ENCODE measurements at regions of chr3 and their contacts with region 1.

Region 1: DNA sequence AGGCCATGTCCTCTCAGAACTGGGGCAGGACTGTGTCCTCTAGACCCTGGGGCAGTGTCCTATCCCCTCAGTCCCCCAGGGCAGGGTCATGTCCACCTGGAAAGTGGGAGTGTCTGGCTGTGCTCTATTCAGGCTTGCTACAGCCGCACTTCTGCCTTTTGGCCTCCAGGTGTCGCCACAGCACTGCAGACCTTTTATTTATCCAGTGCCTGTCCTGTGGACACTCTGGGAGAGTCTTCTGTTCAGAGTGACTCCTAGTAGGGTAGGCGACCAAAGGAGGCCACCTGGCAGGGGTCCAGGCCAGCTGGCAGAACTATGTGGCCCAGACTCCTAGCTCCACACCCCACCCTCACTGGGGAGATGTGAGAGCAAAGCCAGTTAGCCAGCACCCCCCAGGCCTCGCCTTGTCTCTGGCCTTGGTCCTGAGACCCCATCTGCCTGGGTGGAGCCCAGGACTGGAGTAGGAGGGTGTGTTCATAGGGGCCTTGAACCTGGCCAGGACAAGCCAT is 3.9 kb downstream of the TMIE start:
- DNase-seq: peak; percentile 73 to 89 (median 88)
- ATAC-seq: peak; percentile 79 to 83
- H3K4me3 ChIP-seq: no peak overlapping the region
- H3K27ac ChIP-seq: no peak overlapping the region
- H3K4me1 ChIP-seq: peaks cover 6% of the 10 kb centered on the region
- H3K27me3 ChIP-seq: no peaks in the 10 kb centered on the region

Region 2: GRCh38 chr3:46578973-46579755 is 125.9 kb before region 1 on chr3:
- intact Hi-C with region 1: no loop called
- DNase-seq: no peak
- ATAC-seq: peak; percentile 43 to 79
- H3K4me3 ChIP-seq: no peak overlapping the region
- H3K27ac ChIP-seq: no peak overlapping the region
- H3K4me1 ChIP-seq: no peaks in the 10 kb centered on the region
- H3K27me3 ChIP-seq: no peaks in the 10 kb centered on the region

Region 3: DNA sequence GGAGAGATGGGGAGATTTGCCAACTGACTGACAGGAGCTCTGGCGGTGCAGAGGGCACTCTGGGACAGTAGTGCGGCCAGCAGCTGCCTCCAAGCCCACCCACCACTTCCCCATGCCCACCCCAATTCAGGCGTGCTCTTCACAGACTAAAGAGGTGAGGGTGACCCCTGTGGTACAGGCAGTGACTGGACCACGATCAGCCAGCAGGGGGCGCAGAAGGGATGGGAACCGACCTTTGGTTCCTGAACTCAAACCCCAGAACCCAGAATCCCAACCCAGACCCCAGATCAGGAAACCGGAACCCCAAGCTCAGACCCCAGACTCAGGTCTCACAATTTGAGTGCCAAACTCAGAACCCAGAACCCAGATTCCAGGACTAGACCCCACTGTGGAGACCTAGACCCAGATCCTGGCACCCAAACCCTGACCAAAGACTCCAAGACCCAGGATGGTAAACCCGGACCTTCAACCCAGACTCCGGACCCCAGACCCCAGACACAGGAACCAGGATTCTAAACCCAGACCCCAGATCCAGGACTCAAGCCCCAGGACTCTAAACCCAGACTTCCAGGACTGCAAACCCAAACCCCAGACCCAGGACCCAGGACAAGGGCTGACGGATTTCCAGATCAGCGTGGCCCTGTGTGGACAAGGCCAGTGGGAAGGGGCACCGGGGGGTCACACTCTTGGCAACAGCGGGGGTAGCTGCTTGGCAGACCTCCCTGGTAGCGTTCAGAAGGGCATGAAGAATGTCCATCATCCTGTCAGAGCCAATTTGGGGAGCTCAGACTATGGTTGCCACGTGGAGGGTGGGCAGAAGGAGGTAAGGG is 161.9 kb after region 1 on chr3:
- intact Hi-C with region 1: loop called in 1 of 4 experiments (anchors 10 kb)
- DNase-seq: peak; percentile 89 to 97 (median 96)
- ATAC-seq: peak; percentile 32 to 67
- H3K4me3 ChIP-seq: no peak overlapping the region
- H3K27ac ChIP-seq: peak overlapping the region; percentile 60
- H3K4me1 ChIP-seq: peaks cover 25% of the 10 kb centered on the region
- H3K27me3 ChIP-seq: no peaks in the 10 kb centered on the region

Region 4: GRCh38 chr3:46895204-46895660 is 190.2 kb after region 1 on chr3:
- intact Hi-C with region 1: loop called in 3 of 4 experiments (anchors 2 to 5 kb)
- DNase-seq: peak; percentile 78 to 94 (median 92)
- ATAC-seq: peak; percentile 20 to 33
- H3K4me3 ChIP-seq: no peak overlapping the region
- H3K27ac ChIP-seq: no peak overlapping the region
- H3K4me1 ChIP-seq: peaks cover 14% of the 10 kb centered on the region
- H3K27me3 ChIP-seq: no peaks in the 10 kb centered on the region

Region 5: DNA sequence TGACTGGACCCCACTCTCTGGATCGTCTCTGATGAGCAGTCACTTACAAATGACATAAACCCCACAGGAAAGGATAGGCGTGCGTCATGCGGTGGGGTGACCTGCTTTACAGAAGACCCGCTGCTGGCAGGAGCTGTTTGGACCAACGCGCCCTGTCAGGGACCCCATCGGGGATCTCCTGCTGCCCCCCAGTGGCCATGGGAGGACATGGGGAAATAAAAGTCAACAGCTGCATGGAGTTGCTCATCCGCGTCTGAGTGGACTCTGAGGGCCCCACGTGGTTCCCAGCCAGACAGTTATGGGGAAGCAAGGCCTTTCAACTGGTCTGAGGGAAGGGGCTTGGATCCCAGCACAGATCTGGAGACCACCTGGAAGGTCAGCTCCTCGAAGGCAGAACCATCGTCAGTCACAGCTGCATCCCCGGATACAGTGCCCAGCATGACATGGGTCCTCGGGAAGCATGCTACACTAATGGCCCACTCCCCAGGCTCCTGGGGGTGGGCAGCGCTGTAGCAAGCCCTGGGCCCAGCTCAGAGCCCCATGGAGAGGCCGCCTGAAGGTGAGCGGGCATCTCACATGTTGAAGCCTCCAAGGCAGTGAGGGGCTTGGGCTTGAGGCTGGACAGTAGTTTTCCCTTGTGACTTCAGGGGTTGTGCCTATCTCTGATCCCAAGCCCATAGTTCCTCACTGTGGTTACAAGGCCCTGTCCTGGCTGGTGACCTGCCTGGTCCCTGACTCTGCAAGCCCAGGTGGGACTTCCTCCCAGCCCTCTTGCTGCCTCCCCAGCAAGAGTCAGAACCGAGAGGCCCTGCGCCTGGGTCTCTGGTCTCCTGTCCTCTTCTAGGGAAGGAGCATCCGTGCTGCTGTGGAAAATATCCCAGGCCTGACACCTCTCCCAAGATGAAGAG is 204.7 kb after region 1 on chr3:
- intact Hi-C with region 1: loop called in 2 of 4 experiments (anchors 2 to 5 kb)
- DNase-seq: peak; percentile 88 to 94 (median 93)
- ATAC-seq: peak; percentile 72 to 79
- H3K4me3 ChIP-seq: no peak overlapping the region
- H3K27ac ChIP-seq: no peak overlapping the region
- H3K4me1 ChIP-seq: peaks cover 9% of the 10 kb centered on the region
- H3K27me3 ChIP-seq: no peaks in the 10 kb centered on the region

Region 6: DNA sequence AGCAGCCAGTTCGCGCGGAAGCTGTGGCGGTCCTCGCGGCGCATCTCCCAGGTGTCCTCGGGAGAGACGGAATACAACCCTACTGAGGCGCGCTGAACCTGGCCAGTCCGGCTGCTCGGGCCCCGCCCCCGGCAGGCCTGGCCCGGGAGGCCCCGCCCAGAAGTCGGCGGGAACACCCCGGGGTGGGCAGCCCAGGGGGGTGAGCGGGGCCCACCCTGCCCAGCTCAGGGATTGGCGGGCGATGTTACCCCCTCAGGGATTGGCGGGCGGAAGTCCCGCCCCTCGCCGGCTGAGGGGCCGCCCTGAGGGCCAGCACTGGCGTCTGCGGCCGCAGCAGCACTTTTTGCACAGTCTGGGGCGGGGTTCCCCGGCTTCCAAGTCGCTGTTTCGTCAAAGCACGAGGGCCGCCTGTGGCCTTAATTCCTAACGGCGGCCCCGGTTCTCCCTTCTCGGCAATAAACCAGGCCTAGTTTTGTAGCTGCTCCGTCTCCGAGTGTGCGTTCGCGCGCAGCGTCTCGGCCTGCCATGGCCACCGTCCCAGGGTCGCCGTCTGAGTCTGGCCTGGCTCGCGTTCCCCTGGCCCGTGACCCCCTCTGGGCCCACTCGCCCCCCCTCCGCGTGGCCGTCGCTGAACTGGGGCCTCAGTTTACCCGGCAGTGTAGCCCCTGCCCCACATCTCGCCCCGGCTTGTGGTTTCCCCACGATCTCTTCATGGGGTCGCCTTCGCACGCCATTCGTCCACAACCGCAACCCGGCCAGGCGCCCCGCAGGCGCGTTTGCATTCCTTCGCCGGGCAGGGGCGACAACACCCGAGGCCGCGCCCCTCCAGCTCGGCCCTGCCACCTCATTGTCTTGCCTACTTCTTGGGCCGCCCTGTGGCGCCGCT is 304.4 kb after region 1 on chr3:
- intact Hi-C with region 1: loop called in 2 of 4 experiments (anchors 10 kb)
- DNase-seq: peak; percentile 94 to 97 (median 96)
- ATAC-seq: peak; percentile 93 to 96
- H3K4me3 ChIP-seq: peak overlapping the region; percentile 46
- H3K27ac ChIP-seq: peak overlapping the region; percentile 82
- H3K4me1 ChIP-seq: no peaks in the 10 kb centered on the region
- H3K27me3 ChIP-seq: no peaks in the 10 kb centered on the region

Region 7: DNA sequence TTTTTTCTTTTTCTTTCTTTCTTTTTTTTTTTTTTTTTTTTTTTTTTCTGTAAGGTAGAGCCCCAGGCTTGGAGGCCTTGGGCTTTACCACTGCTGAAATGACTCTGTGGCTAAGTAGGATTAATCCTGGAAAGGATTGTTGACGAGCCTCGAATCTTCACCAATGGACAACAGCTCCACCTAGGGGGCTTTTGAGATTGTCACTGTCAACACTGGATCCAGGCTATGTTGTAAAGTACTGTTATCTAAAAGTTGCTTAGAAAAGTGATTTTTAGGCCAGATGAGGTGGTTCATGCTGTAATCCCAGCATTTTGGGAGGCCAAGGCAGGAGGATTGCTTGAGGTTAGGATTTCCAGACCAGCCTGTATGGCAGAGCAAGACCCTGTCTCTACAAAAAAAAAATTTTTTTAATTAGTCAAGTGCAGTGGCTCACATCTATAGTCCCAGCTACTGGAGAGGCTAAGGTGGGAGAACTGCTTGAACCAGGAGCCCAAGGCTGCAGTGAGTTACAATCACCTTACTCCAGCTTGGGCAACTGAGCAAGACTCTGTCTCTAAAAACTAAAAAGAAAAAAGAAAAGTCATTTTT is 619.3 kb after region 1 on chr3:
- intact Hi-C with region 1: loop called in 1 of 4 experiments (anchors 10 kb)
- DNase-seq: peak in 2 of 3 donors; percentile 29 to 49
- ATAC-seq: peak; percentile 87 to 90
- H3K4me3 ChIP-seq: no peak overlapping the region
- H3K27ac ChIP-seq: no peak overlapping the region
- H3K4me1 ChIP-seq: peaks cover 3% of the 10 kb centered on the region
- H3K27me3 ChIP-seq: no peaks in the 10 kb centered on the region

Measured in right cardiac atrium (tissue), 5 donors.